ENCODE measurements at regions of chr11 and their contacts with region 1.

Region 1: GRCh38 chr11:75204685-75205563 is 35.6 kb upstream of the TPBGL start:
- DNase-seq: peak; percentile 87
- CTCF ChIP-seq: peak; percentile 94

Region 2: GRCh38 chr11:74948898-74949747 is 255.8 kb before region 1 on chr11 and contains the starts of genes SPCS2 and XRRA1:
- in situ Hi-C with region 1: loop called (anchors 25 kb)
- DNase-seq: peak; percentile 91
- CTCF ChIP-seq: no peak

Region 3: DNA sequence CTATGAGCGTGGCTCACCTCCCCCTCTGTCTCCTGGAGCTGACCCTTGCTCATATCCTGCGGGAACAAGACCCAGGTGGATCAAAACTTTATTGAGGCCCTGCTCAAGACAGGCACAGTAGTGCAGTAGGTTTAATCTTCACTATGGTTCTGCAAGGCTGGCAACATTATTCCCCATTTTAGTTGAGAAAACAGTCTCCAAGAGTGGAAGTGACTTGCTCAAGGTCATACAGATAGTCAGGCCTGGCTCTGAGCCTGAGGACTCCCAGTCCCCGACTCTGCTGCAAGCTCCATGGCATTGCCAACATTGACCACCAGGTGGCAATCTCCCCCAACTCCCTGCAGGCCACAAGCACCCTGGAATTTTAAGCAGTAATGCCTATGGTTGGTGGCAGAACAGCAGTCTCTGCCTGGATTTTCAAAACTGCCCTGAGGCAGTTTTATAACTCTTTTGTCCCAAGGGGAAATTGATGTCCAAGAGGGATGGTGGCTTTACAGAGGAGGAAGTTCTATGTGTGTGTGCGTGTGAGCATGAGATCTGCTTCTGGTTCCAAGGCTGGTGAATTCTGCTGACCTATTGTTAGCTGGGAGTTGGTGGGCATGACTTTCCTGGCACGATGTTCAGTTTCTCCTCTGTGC is 182.0 kb before region 1 on chr11:
- in situ Hi-C with region 1: loop called (anchors 25 kb)
- DNase-seq: peak; percentile 73
- CTCF ChIP-seq: peak; percentile 96

Region 4: DNA sequence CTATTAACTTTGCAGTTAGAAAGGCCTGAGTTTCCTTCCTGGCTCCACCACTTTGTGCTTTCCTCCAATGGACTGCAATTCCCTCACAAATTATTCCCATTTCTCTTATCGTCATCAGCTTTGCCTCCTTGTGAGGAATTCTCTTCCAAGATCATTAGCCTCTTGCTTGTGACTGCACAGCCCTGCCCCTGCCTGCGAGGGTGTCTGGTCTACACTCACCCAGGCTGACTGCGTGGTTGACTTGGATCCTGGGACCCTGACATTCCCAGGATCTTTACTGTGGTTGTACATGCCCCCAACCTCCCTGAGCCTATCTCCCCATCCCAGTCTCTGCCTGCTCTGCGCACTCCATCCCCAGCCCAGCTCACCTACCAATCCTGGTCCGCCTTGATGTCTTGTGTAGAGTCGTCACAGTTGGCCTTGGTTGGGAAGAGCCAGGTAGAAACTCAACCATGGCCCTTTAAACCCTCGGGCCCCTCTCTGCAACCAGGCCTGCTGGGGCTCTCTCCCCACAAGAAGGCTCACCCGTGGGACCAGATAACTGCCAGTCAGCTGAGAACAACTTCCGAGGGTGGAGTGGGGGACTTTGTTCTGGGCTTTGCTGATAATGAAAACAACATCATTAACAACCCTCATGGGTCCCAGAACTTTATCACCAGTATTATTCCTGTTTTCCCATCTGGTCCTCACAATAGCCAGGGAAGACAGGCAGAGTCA is 108.3 kb before region 1 on chr11 and contains the start of gene OR2AT4:
- in situ Hi-C with region 1: no loop called
- DNase-seq: no peak
- CTCF ChIP-seq: no peak

Region 5: GRCh38 chr11:75107187-75107586 is 97.7 kb before region 1 on chr11:
- in situ Hi-C with region 1: no loop called
- DNase-seq: no peak
- CTCF ChIP-seq: no peak

Region 6: DNA sequence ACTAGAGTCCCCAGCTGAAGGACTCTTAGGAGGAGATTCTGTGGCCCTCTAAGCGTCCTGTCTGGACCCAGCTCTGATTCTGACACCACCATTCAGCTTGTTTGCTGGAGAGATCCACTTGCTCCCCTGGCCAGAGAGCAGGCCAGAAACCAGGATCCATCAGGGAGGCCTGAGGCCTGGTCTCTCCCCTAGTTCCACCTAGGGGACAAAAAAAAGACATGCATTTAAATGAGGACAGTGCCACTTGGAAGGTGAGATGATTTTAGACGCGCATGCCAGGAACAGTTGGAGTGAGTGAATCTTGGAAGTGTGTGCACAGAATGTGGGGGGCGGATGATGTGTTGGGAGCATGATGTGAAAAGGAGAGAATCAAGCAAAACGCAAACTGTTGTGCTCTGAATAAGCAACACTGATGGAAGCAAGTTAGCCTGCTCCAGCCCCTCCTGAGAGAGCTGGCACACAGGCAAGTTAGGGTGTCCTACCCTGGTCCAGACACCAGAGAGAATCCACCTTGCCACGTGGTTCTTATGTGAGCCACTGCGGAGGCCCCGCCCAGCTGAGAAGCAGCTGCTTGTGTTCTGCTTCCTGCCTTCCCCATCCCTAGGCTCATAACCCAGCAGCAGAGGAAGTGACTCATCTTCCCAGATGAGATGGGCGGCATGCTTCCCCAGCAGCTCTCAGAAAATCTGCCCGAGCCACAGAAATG is 62.1 kb before region 1 on chr11:
- in situ Hi-C with region 1: loop called (anchors 10 kb)
- DNase-seq: peak; percentile 59
- CTCF ChIP-seq: peak; percentile 1